ENCODE measurements at regions of chr11 and their contacts with region 1.

Region 1: GRCh38 chr11:20363500-20364411 is at the start of gene HTATIP2:
- DNase-seq: peak; percentile 91
- total RNA-seq, gene HTATIP2: 15.7 to 21.2 TPM

Region 2: DNA sequence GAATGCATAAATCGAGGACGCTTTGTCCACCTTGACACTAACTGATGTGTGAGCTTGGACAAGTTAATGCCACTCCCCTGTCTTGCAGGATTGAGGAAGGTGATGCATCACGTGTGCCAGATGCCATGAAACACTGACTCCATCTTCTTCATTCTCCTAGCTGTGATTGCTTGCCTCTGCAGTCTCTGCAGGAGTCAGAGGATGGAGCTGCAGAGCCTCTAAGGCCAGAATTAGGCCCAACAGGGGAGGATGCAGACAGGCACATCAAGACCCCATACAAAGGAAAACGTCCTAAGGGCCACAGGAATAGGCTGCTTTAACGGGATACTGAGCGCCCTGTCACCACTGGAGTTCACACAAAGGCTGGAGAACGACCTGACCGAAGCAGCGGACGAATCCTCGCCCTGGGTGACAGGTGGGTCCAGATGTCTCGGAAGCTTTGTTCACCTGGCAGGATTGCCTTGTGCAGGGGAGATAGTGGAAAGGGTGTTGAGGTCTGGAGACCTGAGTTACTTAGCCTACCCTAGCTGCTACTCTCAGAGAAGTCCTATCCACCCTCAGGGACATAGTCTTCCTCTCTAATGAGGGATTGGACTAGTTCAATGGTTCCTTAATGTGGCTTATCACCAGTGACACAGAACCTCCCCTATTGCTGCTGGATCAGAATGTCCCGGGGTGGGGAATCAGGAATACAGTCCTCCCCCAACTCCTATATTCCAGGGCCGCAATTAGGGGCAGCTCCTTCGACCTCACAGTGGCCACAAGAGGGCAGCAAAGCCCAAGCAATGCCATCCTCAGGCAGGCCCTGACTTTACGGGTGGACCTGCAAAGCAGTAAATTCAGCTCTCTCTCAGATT is 235.9 kb before region 1 on chr11:
- intact Hi-C with region 1: loop called in 1 of 2 experiments (anchors 10 kb)
- DNase-seq: peak; percentile 91